ENCODE measurements at regions of chr5 and their contacts with region 1.

Region 1: DNA sequence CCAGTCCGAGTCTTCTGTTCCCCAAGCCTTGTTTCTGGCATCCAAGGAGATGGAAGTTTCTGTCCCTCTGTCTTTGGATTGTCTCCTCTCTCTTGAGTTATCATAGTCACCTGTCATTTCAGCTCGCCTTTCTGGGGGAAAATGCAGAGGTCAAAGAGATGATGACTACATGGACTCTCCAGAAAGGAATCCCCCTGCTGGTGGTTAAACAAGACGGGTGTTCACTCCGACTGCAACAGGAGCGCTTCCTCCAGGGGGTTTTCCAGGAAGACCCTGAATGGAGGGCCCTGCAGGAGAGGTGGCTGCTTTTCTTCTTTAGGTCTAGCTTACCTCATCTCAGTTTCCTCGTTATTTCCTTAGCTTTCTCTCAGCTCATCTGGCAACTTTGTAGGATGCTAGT is 25.1 kb downstream of the ERAP2 start:
- DNase-seq: no peak
- H3K4me3 ChIP-seq: no peak overlapping the region
- H3K27ac ChIP-seq: no peak overlapping the region
- H3K4me1 ChIP-seq: peaks cover 0 to 29% (median 14%) of the 10 kb centered on the region in 6 donors
- H3K27me3 ChIP-seq: no peaks in the 10 kb centered on the region
- CTCF ChIP-seq: no peak
- POLR2A ChIP-seq: no peak

Region 2: DNA sequence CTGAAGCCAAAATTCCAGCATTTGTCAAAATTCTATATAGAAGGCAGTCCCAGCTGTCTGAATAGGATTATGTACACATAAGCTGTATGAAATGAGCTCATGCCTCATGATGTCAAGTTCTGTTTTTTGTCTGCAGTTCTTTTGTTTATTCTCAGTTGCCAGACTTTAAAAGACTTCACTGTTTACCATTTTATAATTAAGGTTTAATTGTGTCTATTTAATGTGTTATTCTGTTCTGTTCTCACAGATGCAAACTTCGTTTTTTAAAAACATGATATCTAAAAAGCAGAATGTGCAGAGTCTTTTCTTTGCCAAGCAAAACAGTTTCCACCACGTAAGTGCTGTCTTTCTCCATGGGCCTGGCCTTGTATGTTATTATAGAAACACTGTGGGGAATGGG is 124.8 kb before region 1 on chr5:
- intact Hi-C with region 1: loop called (anchors 10 kb)
- DNase-seq: no peak
- H3K4me3 ChIP-seq: no peak overlapping the region
- H3K27ac ChIP-seq: no peak overlapping the region
- H3K4me1 ChIP-seq: peaks cover 0 to 14% (median 0%) of the 10 kb centered on the region in 6 donors
- H3K27me3 ChIP-seq: no peaks in the 10 kb centered on the region
- CTCF ChIP-seq: no peak
- POLR2A ChIP-seq: no peak

Region 3: DNA sequence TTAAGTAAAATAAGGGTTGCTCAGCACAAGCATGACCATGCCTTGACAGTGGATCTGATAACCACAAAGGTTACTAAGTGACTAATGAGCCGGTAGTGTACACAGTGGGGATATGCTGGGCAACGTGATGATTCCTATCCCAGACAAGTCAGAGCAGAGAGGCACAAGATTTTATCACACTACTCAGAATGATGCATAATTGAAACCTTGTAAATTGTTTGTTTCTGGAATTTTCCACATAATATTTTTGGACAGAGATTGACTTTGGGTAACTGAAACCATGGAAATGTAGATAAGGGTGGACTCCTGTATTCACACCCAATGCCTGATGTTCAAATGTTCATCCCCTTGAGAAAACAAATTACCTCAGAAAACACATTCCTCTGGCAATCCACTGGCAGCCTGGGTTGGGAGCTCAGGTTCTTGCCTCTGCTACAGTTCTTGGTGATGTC is 77.5 kb before region 1 on chr5:
- intact Hi-C with region 1: no loop called
- DNase-seq: no peak
- H3K4me3 ChIP-seq: no peak overlapping the region
- H3K27ac ChIP-seq: no peak overlapping the region
- H3K4me1 ChIP-seq: peaks cover 4 to 23% (median 12%) of the 10 kb centered on the region in 6 donors
- H3K27me3 ChIP-seq: no peaks in the 10 kb centered on the region
- CTCF ChIP-seq: no peak
- POLR2A ChIP-seq: no peak

Measured in spleen (tissue), 13 donors.